Dorsolateral prefrontal cortex (tissue), 120 donors: ENCODE measurements at regions of chrX and their contacts with region 1.

Region 1: DNA sequence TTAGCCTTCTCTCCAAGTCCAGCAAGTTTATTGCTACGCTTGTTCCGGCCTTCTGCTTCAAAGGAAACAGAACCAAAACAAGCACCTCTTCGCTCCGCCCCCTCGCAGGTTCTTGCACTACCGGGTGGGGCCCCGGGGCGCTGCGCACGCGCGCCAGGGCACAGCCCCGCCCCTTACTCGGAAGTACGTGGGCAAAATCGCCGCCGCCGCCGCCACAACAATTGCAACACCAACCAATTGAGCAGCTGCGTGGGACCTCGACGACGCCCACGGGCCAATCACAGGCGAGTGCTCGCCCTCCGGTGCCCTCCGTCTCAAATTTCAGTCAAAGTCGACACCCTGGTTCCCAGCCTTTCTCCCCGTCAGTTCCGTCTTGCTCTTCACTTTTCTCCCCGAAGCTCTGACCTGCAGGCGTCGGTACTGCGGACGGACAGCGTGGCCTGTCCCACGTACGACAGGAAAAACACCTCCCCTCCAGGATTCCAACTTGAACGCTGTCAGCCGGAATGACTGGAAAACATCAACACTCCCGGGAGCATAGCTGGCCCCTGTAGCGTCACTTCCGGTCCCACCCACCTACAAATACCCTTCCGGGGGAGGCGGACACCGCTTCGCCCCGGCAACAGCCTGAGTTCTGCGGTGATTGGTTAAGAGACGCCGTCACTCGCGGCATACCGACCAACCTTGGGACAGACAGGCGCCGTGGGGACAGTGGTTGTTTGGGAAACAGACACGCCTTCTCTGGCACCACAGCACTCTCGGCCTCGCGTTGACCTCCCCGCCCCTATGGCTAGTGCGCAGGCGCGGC is 624 bp upstream of the OTUD5 start:
- DNase-seq: peak; percentile 87 to 98 (median 96)
- H3K4me3 ChIP-seq: peak overlapping the region; percentile 34 to 79 (median 68)
- H3K27ac ChIP-seq: peak overlapping the region; percentile 79 to 99 (median 95)
- H3K27me3 ChIP-seq: peaks cover 0 to 41% (median 0%) of the 10 kb centered on the region in 45 donors
- CTCF ChIP-seq: peak in 1 of 56 donors; percentile 9

Region 2: DNA sequence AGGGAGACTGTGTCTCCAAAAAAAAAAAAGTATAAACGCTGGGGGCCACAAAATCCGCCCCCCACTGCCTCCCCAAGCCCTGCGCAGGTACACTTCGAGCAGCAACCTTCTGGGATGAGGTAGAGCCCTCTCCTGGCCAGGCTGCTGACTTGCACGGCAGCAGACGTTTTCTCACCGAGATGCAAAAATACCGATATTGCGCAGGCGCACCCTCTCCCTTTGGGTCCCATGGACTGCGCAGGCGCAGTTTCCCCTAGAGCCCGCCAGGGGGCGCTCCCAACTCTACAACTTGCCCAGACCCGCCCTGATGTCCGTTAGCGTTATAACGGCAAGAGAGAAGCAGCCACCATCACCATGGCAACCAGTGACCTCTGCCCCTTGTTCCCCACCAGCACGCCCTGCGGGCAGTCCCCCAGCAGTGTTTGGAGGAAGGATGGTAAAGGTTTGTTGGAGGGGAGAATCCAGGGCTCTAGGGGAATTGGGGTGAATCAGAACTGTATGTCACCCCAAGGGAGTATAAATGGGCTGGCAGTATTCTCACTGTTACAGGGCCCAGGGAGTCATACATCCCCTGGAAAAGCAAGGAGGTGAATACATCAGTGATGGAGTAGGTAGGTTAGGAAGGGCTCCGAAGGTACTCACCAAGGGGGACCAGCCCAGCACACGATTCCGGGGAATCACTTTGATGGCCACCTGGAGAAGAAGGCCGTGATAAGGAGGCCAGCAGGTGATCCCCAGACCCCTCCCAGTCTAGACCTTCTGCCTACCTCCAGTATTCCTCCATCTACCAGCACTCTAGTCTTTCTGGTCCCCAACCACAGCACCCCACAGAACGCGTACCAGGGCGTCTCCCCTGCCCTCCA is 40.7 kb before region 1 on chrX:
- intact Hi-C with region 1: loop called in 1 of 2 experiments (anchors 5 kb)
- DNase-seq: peak; percentile 67 to 87 (median 82)
- H3K4me3 ChIP-seq: peak overlapping the region in 58 of 59 donors; percentile 9 to 77 (median 63)
- H3K27ac ChIP-seq: peak overlapping the region in 42 of 59 donors; percentile 8 to 87 (median 51)
- H3K27me3 ChIP-seq: peaks cover 0 to 54% (median 3%) of the 10 kb centered on the region in 45 donors
- CTCF ChIP-seq: peak; percentile 53 to 96 (median 91)

Region 3: DNA sequence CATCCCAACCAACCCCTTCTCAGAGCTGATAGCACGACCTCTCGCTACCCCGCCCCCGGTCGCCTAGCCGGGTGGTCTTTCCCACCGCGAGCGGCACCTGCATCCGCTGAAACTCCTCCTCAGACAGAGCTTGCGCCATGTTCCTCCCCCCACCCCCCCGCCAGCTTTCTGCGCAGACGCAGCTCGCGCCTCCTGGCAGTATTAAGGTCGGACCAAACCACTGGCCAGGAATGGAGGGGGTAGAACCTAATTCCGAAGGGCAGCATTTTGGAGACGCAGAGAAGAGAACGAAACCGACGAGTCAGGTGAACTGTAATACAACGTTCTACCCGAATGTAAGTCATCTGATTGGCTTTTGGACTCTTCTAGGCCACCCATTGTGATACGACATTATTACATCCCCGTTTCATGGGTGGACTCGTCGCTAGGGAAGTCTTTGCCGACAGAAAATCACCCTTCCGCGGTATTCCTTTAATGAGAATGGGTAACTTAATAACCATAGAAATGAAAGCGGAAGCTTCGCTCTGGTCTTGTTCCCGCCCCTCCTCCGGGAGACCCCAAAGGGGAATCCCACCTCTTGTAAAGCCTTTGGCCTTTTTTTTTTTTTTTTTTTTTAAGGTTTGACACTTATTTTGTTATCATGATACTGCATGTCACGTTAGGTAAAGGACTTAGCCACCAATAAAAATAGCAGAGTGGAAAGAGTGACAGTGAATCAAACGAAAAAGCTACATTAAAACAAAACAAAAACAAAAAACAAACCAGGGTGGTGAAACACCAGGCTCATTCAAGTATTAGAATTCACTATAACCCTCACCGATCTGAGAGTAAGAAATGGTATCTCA is 44.3 kb after region 1 on chrX and contains the start of gene GRIPAP1:
- intact Hi-C with region 1: loop called in 1 of 2 experiments (anchors 5 kb)
- DNase-seq: peak in 9 of 10 donors; percentile 24 to 71 (median 50)
- H3K4me3 ChIP-seq: peak within 1 kb of the TSS; percentile 41 to 86 (median 71)
- H3K27ac ChIP-seq: peak within 1 kb of the TSS in 58 of 59 donors; percentile 12 to 97 (median 88)
- H3K27me3 ChIP-seq: peaks cover 0 to 31% (median 0%) of the 10 kb centered on the region in 45 donors
- CTCF ChIP-seq: no peak
- total RNA-seq, gene GRIPAP1: 95.2 to 201 (median 126) TPM

Region 4: DNA sequence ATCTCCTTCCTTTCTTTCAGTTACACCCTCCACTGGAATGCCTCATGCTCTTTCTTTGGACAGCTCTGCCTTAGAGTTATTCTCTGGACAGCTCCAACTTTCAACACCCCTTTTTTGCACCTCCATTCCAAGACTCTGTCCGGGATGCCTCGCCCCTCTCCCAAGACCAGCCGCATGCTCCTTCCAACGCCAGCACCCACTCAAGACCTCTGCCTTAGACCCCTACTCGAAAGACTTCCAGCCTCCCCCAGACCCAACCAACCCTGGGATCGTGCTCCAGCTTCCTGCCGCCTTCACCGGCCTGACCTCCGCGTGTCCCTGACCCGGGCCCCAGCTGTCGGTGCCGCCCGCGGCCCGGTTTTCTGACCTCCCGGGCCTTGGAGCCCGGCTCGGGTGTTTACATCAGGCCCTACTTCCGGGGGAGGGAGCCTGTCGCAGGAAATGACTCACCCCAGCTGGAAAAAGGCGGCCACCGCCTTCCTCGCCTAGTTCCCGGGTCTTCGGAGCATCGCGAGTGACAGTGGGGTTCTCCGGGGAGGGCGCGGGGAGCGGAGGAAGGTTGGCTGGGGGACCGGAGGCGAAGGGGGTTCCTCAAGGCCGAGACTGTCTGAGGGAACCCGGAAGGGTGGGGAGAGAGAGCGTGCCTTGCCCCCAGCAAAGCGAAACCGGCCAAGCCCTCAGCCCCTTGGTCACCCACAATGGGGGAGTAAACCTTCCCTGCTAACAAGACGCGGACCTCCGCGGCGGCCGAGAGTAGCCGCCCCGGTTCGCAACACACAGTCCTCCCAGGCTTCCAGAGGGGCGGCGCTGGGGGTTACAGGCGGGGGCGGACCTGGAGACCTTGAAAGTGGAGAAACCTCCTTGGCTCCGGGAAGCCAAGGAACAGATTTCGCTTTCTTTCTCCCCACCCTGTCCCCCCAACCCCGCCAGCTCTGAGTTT is 121.7 kb after region 1 on chrX and contains the start of gene WDR45:
- intact Hi-C with region 1: no loop called
- DNase-seq: peak; percentile 52 to 84 (median 73)
- H3K4me3 ChIP-seq: peak within 1 kb of the TSS; percentile 43 to 80 (median 70)
- H3K27ac ChIP-seq: peak within 1 kb of the TSS; percentile 63 to 96 (median 91)
- H3K27me3 ChIP-seq: peaks cover 0 to 42% (median 0%) of the 10 kb centered on the region in 45 donors
- CTCF ChIP-seq: no peak
- total RNA-seq, gene WDR45: 52.9 to 142 (median 77.9) TPM